ENCODE measurements at regions of chr3 and their contacts with region 1.

Region 1: GRCh38 chr3:186361762-186362536 is at the start of gene DGKG:
- DNase-seq: peak; percentile 58 to 72
- ATAC-seq: peak; percentile 77 to 90 (median 82)
- H3K4me3 ChIP-seq: peak within 1 kb of the TSS; percentile 55 to 77 (median 66)
- H3K27ac ChIP-seq: peak within 1 kb of the TSS; percentile 29 to 91 (median 79)
- H3K4me1 ChIP-seq: peaks cover 0 to 57% (median 26%) of the 10 kb centered on the region in 9 donors
- H3K27me3 ChIP-seq: peaks cover 0 to 43% (median 29%) of the 10 kb centered on the region in 7 donors
- CTCF ChIP-seq: no peak
- total RNA-seq, gene DGKG: 14.6 to 75.7 (median 45.4) TPM

Region 2: DNA sequence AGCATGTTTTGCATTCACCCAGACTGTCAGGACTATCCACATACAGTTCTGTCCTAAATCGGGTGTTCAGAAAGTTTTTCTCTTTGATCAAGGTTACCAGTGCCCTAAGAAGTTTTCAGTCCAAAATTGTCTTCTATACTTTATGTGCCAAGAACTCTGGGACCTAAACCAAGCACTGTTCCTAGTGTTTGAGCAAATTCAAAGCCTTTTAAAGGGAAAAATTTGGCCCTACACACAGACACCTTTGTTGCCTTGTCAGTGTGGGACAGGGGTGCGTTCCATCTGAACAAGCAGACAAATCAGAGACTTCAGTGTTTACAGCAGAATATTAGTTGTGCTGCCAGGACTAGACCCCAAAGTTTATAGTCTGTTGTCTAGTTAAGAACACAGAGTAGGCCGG is 50.5 kb before region 1 on chr3:
- intact Hi-C with region 1: loop called in 1 of 10 experiments (anchors 5 kb)
- DNase-seq: no peak
- ATAC-seq: no peak
- H3K4me3 ChIP-seq: no peak overlapping the region
- H3K27ac ChIP-seq: no peak overlapping the region
- H3K4me1 ChIP-seq: peaks cover 0 to 9% (median 3%) of the 10 kb centered on the region in 9 donors
- H3K27me3 ChIP-seq: no peaks in the 10 kb centered on the region
- CTCF ChIP-seq: no peak

Region 3: DNA sequence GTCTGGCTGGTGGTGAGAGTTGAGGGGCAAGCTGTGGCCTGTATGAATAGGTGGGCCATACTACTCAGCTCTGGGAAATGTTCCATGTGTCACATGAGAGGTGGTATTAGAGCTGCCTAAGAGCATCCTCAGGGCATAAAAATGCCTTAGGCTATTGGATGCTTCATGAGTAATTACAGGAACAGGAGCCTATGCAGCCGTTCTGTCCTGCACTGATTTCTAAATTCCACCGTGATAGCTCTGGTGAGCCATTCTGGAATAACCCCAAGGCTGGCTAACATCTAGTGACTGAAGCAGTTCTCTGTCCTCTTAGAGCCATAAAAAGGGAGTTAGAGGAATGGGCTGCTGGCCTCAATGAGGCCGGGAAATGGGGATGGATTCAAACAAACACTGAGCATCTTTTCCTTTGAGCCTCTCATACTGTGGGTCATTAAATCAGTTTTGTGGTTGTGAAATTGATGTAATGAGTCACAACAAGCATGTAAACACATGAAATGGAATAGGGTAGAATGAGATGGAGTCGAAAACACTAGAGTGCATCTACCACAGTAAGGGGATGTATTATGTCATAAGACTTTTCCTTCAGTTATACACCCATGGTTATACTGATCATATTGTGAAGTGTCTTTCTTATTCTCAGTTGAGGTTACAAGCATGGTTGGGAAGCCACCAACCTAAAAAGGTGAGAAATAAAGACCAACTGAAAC is 40.9 kb before region 1 on chr3:
- intact Hi-C with region 1: loop called in 1 of 10 experiments (anchors 5 kb)
- DNase-seq: no peak
- ATAC-seq: no peak
- H3K4me3 ChIP-seq: no peak overlapping the region
- H3K27ac ChIP-seq: no peak overlapping the region
- H3K4me1 ChIP-seq: peaks cover 0 to 27% (median 0%) of the 10 kb centered on the region in 9 donors
- H3K27me3 ChIP-seq: no peaks in the 10 kb centered on the region
- CTCF ChIP-seq: no peak

Region 4: DNA sequence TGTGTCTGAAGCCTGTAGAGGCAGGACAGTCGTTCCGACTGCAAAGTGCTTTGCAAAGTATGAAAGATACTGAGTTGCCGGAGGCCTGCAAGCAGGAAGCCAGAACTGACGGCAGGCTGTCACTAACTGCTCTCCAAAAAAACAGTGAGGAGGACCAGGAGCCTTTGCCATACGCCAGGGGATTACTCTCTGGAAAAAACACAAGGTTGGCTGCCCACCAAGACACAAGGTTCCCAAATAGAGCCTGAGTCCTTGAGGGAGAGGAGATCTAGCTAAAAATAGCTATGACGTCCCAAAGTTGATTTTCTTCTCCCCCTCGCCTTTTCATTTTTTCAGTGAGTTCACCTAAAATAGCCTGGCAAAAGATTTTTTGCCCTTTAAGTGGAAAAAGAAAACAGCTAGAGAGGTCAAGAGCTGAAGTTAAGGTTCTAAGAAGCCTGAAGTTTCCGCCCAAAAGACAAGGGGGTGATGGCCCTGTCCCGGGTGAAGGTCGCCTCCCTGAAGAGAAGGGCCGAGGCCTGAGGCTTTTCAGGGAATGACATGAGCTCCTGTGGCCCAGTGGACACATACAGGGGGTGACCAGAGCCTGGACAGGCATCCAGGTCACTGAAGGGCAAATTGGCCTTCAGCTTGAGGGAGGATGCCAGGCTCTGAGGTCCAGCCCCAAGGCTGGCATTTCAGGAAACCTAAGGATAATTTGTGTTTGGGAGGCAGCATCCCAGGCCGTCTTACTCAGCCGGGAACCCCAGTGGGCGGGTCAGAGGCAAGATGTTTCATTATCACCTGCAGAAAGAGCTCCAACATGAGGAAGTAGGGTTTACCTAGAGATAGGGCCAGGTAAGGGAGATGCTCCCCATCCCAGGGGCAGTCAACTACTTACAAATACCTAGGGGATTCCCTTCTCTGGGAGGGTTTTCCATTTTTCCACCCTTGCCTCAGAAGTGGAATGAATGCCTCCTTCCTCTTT is 45.0 kb after region 1 on chr3:
- intact Hi-C with region 1: loop called in 2 of 10 experiments (anchors 5 kb)
- DNase-seq: peak; percentile 51 to 92
- ATAC-seq: peak; percentile 92 to 98 (median 96)
- H3K4me3 ChIP-seq: no peak overlapping the region
- H3K27ac ChIP-seq: peak overlapping the region; percentile 67 to 95 (median 89)
- H3K4me1 ChIP-seq: peaks cover 6 to 28% (median 11%) of the 10 kb centered on the region in 9 donors
- H3K27me3 ChIP-seq: no peaks in the 10 kb centered on the region
- CTCF ChIP-seq: no peak

Region 5: GRCh38 chr3:186413615-186414415 is 51.9 kb after region 1 on chr3:
- intact Hi-C with region 1: loop called in 2 of 10 experiments (anchors 5 kb)
- DNase-seq: peak; percentile 28 to 34
- ATAC-seq: peak; percentile 40 to 93 (median 78)
- H3K4me3 ChIP-seq: peak overlapping the region in 8 of 10 donors; percentile 18 to 43 (median 40)
- H3K27ac ChIP-seq: peak overlapping the region; percentile 44 to 85 (median 72)
- H3K4me1 ChIP-seq: peaks cover 4 to 22% (median 18%) of the 10 kb centered on the region in 9 donors
- H3K27me3 ChIP-seq: no peaks in the 10 kb centered on the region
- CTCF ChIP-seq: no peak

Region 6: DNA sequence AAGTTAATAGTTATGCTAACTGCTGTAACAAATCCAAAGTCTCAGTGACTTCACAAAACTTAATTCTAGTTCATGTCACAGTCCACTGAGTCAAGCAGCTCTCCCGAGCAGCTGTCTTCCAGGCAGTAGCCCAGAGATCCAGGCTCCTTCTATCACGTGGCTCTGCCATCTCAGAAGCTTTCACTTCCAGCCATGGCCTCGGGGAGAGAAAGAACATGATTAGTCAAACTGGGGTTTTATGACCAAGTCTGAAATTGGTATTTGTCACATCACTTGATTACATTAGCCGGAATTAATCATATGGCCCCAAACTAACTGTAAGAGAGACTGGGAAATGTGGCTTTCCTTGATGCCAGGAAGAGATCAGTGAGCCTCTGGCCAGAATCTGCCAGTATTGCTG is 70.2 kb after region 1 on chr3:
- intact Hi-C with region 1: loop called in 1 of 10 experiments (anchors 10 kb)
- DNase-seq: no peak
- ATAC-seq: no peak
- H3K4me3 ChIP-seq: no peak overlapping the region
- H3K27ac ChIP-seq: no peak overlapping the region
- H3K4me1 ChIP-seq: peaks cover 0 to 12% (median 9%) of the 10 kb centered on the region in 9 donors
- H3K27me3 ChIP-seq: no peaks in the 10 kb centered on the region
- CTCF ChIP-seq: no peak

Region 7: GRCh38 chr3:187714404-187714979 is 1352.5 kb after region 1 on chr3:
- intact Hi-C with region 1: no loop called
- DNase-seq: peak in 1 of 2 donors; percentile 80
- ATAC-seq: peak; percentile 76 to 94 (median 86)
- H3K4me3 ChIP-seq: no peak overlapping the region
- H3K27ac ChIP-seq: no peak overlapping the region
- H3K4me1 ChIP-seq: peaks cover 0 to 12% (median 3%) of the 10 kb centered on the region in 9 donors
- H3K27me3 ChIP-seq: no peaks in the 10 kb centered on the region
- CTCF ChIP-seq: peak; percentile 93 to 97 (median 94)

Measured in heart right ventricle (tissue), 16 donors.